Astrocyte of the cerebellum (primary cell): ENCODE measurements at regions of chr5 and their contacts with region 1.

Region 1: DNA sequence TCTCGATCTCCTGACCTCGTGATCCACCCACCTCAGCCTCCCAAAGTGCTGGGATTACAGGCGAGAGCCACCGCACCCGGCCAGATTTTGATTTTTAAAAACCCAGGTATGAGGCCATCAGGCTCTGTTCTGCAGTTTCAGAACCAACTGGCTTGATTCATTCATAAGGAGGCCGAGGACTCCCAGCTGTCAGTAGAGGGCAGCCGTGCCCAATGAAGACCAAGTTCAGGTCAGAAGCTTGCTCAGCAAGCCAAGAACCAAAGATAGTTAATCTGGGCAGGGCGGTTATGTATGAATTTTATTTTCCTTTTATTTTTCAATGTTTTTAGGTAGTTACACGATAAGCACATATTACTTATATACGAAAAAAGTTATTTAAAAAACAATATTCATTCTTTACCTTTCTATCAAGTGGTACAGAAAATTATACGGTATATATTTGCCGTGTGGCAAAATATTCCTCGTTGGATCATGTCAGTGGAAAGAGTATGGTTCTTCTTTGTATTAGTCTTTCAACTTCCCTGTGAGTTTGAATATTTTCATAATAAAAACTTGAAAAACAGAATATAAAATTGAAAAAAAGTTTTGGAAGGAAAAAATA is 18.0 kb downstream of the MGAT1 start:
- DNase-seq: peak; percentile 67
- H3K4me3 ChIP-seq: no peak overlapping the region
- CTCF ChIP-seq: peak; percentile 86

Region 2: DNA sequence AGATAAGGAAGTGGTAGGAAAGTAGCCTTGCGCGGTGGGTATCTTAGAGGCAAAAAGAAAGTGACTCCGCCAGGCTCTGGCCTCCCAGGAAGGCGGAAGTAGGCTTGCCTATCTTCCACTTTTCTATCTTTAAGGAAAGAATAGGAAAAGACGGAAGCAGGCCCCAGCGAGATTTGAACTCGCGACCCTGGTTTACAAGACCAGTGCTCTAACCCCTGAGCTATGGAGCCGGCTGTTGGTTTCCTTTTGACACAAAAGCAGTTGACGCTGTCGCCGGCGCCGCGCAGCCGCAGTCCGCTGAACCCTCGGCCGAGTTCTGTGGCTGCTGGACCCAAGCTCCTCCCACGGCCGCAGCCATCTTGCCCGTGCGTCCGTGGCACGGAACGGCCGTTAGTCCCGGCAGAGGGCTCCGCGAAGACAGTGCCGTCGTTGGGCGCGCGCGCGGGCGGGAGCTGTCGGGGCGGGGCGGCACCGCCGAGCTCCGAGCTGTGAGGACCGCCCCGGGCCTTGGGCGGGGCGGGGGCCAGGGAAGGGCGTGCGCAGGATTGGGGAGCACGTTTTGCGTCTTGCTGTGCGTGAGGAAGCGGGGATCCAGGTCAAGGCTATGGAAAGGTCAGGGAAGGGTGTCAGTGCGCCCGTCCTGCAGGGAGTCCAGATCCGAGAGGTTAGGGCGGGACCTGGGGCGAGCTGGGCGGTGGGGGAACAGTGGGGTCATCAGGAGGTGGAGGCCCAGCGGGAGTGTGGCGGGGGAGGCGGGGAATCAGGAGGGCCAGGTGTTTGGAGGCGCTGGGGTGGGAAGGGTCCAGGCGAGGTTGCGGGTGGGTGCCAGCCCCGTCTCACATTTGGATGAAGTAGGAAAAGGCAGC is 407.2 kb after region 1 on chr5:
- in situ Hi-C with region 1: loop called (anchors 10 kb)
- DNase-seq: peak; percentile 85
- H3K4me3 ChIP-seq: peak overlapping the region; percentile 88
- CTCF ChIP-seq: no peak